ENCODE measurements at regions of chr13 and their contacts with region 1.

Region 1: GRCh38 chr13:60788156-60788829 is 391.3 kb downstream of the TDRD3 start:
- DNase-seq: peak; percentile 2
- H3K4me3 ChIP-seq: no peak overlapping the region
- H3K27ac ChIP-seq: no peak overlapping the region
- H3K4me1 ChIP-seq: peaks cover 4% of the 10 kb centered on the region
- H3K27me3 ChIP-seq: no peaks in the 10 kb centered on the region
- CTCF ChIP-seq: no peak

Region 2: DNA sequence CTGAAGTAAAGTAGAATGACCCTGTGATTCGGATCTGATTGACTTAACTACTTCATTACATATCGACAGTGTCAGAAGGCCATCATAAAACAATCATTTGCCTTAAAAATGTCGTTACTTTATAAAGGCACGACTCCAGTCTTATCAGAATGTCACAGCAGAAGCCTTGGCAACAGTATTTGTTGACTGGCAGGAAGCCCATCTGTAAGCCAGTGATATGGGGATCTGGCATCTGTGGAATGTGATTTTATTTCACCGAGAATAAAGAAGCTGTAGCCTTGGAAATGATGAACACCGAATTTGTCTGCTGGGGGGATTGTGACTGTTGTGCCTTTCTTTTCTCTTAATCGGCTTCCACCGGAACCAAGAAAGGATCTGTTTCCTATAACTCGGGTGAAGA is 28.8 kb before region 1 on chr13:
- CTCF ChIA-PET with region 1: no interaction called
- dilution Hi-C with region 1: no loop called
- in situ Hi-C with region 1: no loop called
- intact Hi-C with region 1: loop called (anchors 2 kb)
- DNase-seq: no peak
- H3K4me3 ChIP-seq: no peak overlapping the region
- H3K27ac ChIP-seq: peak overlapping the region; percentile 68
- H3K4me1 ChIP-seq: peaks cover 5% of the 10 kb centered on the region
- H3K27me3 ChIP-seq: no peaks in the 10 kb centered on the region
- CTCF ChIP-seq: no peak

Region 3: GRCh38 chr13:60765700-60766411 is 22.4 kb before region 1 on chr13:
- CTCF ChIA-PET with region 1: no interaction called
- dilution Hi-C with region 1: no loop called
- in situ Hi-C with region 1: no loop called
- intact Hi-C with region 1: loop called (anchors 2 kb)
- DNase-seq: no peak
- H3K4me3 ChIP-seq: no peak overlapping the region
- H3K27ac ChIP-seq: no peak overlapping the region
- H3K4me1 ChIP-seq: peaks cover 4% of the 10 kb centered on the region
- H3K27me3 ChIP-seq: no peaks in the 10 kb centered on the region
- CTCF ChIP-seq: no peak

Region 4: DNA sequence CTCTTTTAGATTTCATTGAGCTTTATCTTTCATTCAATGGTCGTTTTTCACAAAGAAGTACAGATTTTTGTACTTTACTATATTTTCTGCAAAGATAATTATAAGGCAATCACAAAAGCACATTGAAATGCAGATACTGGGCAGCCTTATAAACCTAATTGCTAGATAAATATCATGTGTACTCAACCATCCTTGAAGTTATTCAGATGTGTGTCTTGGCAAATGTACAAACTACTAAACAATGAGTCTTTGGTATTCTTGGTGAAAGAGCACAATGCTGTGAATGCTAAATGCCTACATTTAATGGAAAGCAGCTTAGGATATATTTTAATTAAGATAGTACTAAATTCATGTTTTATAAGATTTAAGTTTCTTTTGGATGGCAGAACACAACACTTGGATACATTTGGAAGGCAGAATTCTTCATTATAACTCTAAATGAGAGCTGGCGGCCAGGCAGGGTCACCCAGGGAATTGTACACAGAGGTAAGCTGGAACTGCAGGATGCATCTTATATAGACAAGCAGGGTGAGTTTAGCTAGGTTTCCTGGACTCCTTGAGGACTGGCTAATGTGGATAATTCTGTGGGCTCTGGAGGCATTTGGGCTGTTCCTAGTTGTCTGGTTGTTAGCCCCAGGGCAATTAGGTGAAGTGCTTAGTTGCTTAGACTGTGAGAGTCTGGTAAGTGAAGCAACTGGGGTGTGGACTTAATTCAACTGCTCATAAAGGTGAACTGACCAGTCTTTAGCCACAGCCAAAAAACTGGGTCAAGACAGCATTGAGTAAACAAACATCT is 340.8 kb after region 1 on chr13:
- CTCF ChIA-PET with region 1: no interaction called
- dilution Hi-C with region 1: no loop called
- in situ Hi-C with region 1: no loop called
- intact Hi-C with region 1: no loop called
- DNase-seq: no peak
- H3K4me3 ChIP-seq: no peak overlapping the region
- H3K27ac ChIP-seq: no peak overlapping the region
- H3K4me1 ChIP-seq: no peaks in the 10 kb centered on the region
- H3K27me3 ChIP-seq: no peaks in the 10 kb centered on the region
- CTCF ChIP-seq: no peak

Measured in mammary epithelial cell (primary cell).